ENCODE measurements at regions of chr16 and their contacts with region 1.

Region 1: DNA sequence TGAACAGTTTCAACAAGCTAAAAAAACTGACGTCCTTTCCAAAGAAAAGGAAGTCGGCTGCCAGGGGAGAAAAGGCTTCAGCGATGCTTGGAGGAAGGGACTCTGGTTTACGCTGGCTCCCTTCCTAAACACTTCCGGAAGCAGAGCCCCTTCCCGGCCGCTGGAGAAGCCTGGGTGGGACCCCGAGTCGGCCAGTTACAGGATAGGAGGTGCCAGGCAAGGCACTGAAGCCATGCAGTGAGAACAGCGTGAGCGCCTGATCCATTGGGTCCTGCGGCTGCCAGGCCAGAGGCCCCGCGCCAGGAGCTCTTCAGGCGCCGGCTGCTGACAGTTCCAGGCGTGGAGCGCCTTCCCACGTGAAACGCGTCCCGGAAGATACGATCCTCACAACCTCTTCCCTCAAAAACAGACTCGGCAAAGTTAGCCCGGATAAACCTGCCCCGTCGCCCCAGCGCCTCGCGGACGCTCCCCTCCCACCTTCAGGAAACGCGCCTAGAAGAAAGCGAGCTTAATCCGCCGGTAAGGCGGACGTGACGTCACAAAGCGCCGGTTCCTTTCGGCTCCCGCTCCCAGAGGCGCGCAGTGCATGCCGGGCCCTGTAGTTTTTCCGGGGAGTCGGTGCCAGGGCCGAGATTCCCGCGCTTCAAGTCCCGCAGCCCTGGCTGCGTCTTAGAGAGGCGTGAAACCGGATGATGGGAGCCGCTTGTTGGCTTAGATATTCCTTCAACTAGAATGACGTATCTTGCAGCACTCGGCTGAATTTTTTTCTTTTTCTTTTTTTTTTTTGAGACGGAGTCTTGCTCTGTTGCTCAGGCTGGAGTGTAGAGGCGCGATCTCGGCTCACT is at the start of gene ADAT1:
- DNase-seq: peak; percentile 97 to 99
- H3K4me3 ChIP-seq: peak within 1 kb of the TSS; percentile 58 to 91
- H3K27ac ChIP-seq: peak within 1 kb of the TSS; percentile 81
- H3K4me1 ChIP-seq: peaks cover 22% of the 10 kb centered on the region
- H3K27me3 ChIP-seq: no peaks in the 10 kb centered on the region
- CTCF ChIP-seq: no peak
- POLR2A ChIP-seq: peak in 1 of 2 donors; percentile 83
- total RNA-seq, gene ADAT1: 44.4 TPM

Region 2: GRCh38 chr16:75464130-75464918 is 158.7 kb before region 1 on chr16 and contains the start of gene TMEM170A:
- intact Hi-C with region 1: loop called (anchors 10 kb)
- DNase-seq: peak in 1 of 2 donors; percentile 99
- H3K4me3 ChIP-seq: peak within 1 kb of the TSS; percentile 94 to 96
- H3K27ac ChIP-seq: peak within 1 kb of the TSS; percentile 96
- H3K4me1 ChIP-seq: peaks cover 34% of the 10 kb centered on the region
- H3K27me3 ChIP-seq: no peaks in the 10 kb centered on the region
- CTCF ChIP-seq: peak; percentile 99 to 100 (median 100)
- POLR2A ChIP-seq: peak; percentile 51 to 90
- total RNA-seq, gene TMEM170A: 21.9 TPM

Region 3: DNA sequence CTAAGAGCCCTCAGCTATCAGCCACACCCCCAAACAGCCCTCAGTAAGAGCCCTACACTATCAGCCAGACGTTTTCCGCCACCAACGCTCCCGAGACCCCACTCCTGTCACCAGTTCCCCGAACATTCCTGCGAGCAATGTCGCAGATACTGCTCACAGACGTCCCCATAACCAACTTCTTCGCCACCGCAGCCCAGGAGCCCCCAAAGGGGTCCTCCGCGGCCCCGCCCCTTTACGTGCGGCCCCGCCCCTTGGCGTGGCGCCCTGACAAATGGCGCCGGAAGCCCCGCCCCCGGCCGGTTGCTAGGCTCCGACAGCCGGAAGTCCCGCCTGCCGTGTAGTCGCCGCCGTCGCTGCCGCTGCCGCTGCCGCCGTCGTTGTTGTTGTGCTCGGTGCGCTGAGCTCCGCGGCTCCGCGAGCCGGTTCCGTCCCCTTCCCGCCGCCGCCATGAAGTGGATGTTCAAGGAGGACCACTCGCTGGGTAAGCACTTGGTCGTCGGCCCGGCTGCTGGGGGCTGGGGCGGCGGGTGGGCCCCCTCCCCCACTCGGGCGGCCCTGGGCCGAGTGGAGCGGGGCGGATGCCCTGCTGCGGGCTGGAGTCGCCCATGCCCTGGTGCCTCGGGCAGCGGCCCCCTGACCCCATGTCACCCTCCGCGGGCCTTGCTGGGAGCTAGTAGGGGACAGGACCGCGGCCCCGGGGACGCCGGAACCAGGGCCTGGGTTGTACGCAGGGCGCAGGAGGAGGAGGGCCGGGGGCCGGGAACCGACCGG is 56.8 kb before region 1 on chr16 and contains the start of gene GABARAPL2:
- intact Hi-C with region 1: loop called (anchors 5 kb)
- DNase-seq: no peak
- H3K4me3 ChIP-seq: peak within 1 kb of the TSS; percentile 80 to 94
- H3K27ac ChIP-seq: peak within 1 kb of the TSS; percentile 80
- H3K4me1 ChIP-seq: peaks cover 43% of the 10 kb centered on the region
- H3K27me3 ChIP-seq: no peaks in the 10 kb centered on the region
- CTCF ChIP-seq: no peak
- POLR2A ChIP-seq: peak in 1 of 2 donors; percentile 66
- total RNA-seq, gene GABARAPL2: 86.4 TPM

Region 4: GRCh38 chr16:75653922-75654321 is 30.9 kb after region 1 on chr16:
- intact Hi-C with region 1: loop called (anchors 2 kb)
- DNase-seq: no peak
- H3K4me3 ChIP-seq: no peak overlapping the region
- H3K27ac ChIP-seq: no peak overlapping the region
- H3K4me1 ChIP-seq: peaks cover 45% of the 10 kb centered on the region
- H3K27me3 ChIP-seq: no peaks in the 10 kb centered on the region
- CTCF ChIP-seq: no peak
- POLR2A ChIP-seq: no peak

Region 5: DNA sequence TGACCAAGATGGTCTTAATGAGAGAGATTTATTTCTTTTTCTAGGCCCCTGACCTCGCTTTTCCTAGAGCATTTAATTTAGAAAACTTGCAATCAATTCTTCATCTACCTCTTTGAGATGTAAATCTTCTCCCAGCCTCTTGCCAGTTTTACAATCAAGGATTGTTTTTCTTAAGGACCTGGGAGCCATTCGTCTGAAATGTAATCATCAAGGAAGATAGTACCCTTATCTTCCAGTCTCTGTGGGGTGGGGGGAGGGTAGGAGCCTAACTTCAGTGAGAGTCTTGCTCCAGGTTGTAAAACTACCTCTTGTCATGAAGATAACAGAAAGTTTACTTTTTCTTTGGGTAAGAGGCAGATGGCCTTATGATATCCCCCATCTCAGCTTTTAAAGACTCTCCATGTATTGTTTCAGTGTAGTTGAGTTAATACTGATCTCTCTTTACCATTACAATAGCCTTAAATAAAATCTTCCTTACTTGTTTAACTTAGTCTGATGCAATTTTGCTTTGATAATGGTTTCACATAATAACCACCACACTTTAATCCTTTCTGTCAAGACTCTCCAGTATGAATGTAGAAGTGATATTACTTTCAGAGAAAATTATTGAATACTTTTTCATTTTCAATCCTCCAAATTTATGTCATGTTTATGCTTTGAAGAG is 213.5 kb after region 1 on chr16:
- intact Hi-C with region 1: no loop called
- DNase-seq: no peak
- H3K4me3 ChIP-seq: no peak overlapping the region
- H3K27ac ChIP-seq: no peak overlapping the region
- H3K4me1 ChIP-seq: no peaks in the 10 kb centered on the region
- H3K27me3 ChIP-seq: no peaks in the 10 kb centered on the region
- CTCF ChIP-seq: no peak
- POLR2A ChIP-seq: no peak

Measured in vagina (tissue), 2 donors.